ENCODE measurements at regions of chr1 and their contacts with region 1.

Region 1: DNA sequence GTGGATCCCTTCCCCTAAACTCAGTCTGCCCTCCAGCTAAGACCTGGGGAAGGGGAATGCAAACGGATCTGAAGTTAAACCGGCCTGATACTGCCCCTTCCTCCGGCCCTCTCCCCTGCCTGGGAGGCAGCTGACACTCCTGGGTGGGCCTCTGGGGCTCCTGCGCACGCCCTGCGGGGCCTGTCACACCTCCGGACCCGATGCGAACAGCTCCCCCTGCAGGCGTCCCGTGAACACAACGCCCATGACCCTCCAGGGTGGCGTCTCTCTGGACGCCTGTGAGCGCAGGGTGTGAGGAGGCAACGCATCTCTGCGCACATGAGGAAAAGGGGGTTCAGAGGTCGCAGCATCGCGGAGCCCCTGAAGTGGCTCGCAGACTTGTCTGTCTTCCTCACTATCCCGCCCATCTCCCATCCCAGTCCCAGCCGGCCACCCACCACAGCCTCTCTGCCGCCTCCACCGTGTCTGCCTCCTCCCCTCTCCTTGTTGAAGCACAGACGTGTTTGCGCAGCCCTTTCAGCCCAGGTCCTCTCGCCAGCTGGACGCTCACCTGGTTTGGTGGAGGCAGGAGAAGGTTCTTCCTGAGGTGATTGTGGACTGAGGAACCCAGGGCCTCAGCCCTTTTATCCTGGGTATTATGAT is 421 bp upstream of the LCE3A start:
- DNase-seq: no peak
- ATAC-seq: peak in 1 of 8 donors; percentile 8
- H3K4me3 ChIP-seq: no peak overlapping the region
- H3K27ac ChIP-seq: no peak overlapping the region
- H3K4me1 ChIP-seq: no peaks in the 10 kb centered on the region
- H3K27me3 ChIP-seq: peaks cover 0 to 23% (median 9%) of the 10 kb centered on the region in 7 donors
- CTCF ChIP-seq: peak in 1 of 9 donors; percentile 12

Region 2: GRCh38 chr1:152582647-152583046 is 40.7 kb before region 1 on chr1:
- intact Hi-C with region 1: loop called in 1 of 10 experiments (anchors 5 kb)
- DNase-seq: no peak
- ATAC-seq: no peak
- H3K4me3 ChIP-seq: no peak overlapping the region
- H3K27ac ChIP-seq: no peak overlapping the region
- H3K4me1 ChIP-seq: no peaks in the 10 kb centered on the region
- H3K27me3 ChIP-seq: peaks cover 0 to 5% (median 0%) of the 10 kb centered on the region in 7 donors
- CTCF ChIP-seq: no peak